ENCODE measurements at regions of chr7 and their contacts with region 1.

Region 1: GRCh38 chr7:116809636-116810266 is 52.6 kb upstream of the CAPZA2 start:
- DNase-seq: no peak
- H3K4me3 Mint-ChIP-seq: no peak overlapping the region
- H3K27ac Mint-ChIP-seq: no peak overlapping the region
- H3K4me1 Mint-ChIP-seq: peaks cover 3% of the 10 kb centered on the region
- H3K27me3 Mint-ChIP-seq: peaks cover 18% of the 10 kb centered on the region

Region 2: GRCh38 chr7:116145245-116145852 is 664.4 kb before region 1 on chr7:
- intact Hi-C with region 1: loop called (anchors 10 kb)
- DNase-seq: peak; percentile 37
- H3K4me3 Mint-ChIP-seq: peak overlapping the region; percentile 41
- H3K27ac Mint-ChIP-seq: peak overlapping the region; percentile 79
- H3K4me1 Mint-ChIP-seq: peaks cover 54% of the 10 kb centered on the region
- H3K27me3 Mint-ChIP-seq: no peaks in the 10 kb centered on the region

Region 3: GRCh38 chr7:116173051-116174028 is 636.4 kb before region 1 on chr7:
- intact Hi-C with region 1: loop called (anchors 5 kb)
- DNase-seq: no peak
- H3K4me3 Mint-ChIP-seq: no peak overlapping the region
- H3K27ac Mint-ChIP-seq: no peak overlapping the region
- H3K4me1 Mint-ChIP-seq: peaks cover 3% of the 10 kb centered on the region
- H3K27me3 Mint-ChIP-seq: peaks cover 34% of the 10 kb centered on the region

Region 4: DNA sequence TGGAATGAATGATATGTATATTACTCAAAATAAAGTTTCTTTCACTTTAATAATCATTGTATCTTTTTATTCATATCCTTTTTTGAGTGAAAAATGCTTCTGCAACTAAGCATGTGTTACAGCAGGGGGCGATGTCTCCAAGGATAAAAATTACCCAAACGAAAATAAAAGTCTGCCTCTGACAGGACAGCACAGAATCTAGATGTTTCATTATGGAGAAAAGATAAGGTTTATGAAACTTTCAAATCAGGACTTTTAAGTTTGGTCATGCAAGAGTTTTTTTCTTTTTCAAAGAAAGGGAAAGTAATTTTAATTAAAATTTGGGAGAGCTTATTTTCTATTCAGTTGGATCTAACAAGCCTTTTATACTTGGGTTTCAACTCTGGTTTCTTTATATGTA is 551.0 kb before region 1 on chr7:
- intact Hi-C with region 1: loop called (anchors 2 kb)
- DNase-seq: no peak
- H3K4me3 Mint-ChIP-seq: no peak overlapping the region
- H3K27ac Mint-ChIP-seq: no peak overlapping the region
- H3K4me1 Mint-ChIP-seq: peaks cover 9% of the 10 kb centered on the region
- H3K27me3 Mint-ChIP-seq: peaks cover 5% of the 10 kb centered on the region

Region 5: GRCh38 chr7:116843378-116843777 is 33.6 kb after region 1 on chr7:
- intact Hi-C with region 1: no loop called
- DNase-seq: no peak
- H3K4me3 Mint-ChIP-seq: no peak overlapping the region
- H3K27ac Mint-ChIP-seq: no peak overlapping the region
- H3K4me1 Mint-ChIP-seq: peaks cover 8% of the 10 kb centered on the region
- H3K27me3 Mint-ChIP-seq: peaks cover 42% of the 10 kb centered on the region

Region 6: GRCh38 chr7:117612642-117613041 is 802.9 kb after region 1 on chr7:
- intact Hi-C with region 1: no loop called
- DNase-seq: no peak
- H3K4me3 Mint-ChIP-seq: no peak overlapping the region
- H3K27ac Mint-ChIP-seq: no peak overlapping the region
- H3K4me1 Mint-ChIP-seq: no peaks in the 10 kb centered on the region
- H3K27me3 Mint-ChIP-seq: peaks cover under 1% of the 10 kb centered on the region